Mammary epithelial cell (primary cell): ENCODE measurements at regions of chr18 and their contacts with region 1.

Region 1: GRCh38 chr18:46167971-46168370 is 63.8 kb downstream of the HAUS1 start:
- DNase-seq: no peak
- H3K4me3 ChIP-seq: no peak overlapping the region
- H3K27ac ChIP-seq: no peak overlapping the region
- H3K4me1 ChIP-seq: peaks cover 16% of the 10 kb centered on the region
- H3K27me3 ChIP-seq: no peaks in the 10 kb centered on the region
- CTCF ChIP-seq: no peak

Region 2: DNA sequence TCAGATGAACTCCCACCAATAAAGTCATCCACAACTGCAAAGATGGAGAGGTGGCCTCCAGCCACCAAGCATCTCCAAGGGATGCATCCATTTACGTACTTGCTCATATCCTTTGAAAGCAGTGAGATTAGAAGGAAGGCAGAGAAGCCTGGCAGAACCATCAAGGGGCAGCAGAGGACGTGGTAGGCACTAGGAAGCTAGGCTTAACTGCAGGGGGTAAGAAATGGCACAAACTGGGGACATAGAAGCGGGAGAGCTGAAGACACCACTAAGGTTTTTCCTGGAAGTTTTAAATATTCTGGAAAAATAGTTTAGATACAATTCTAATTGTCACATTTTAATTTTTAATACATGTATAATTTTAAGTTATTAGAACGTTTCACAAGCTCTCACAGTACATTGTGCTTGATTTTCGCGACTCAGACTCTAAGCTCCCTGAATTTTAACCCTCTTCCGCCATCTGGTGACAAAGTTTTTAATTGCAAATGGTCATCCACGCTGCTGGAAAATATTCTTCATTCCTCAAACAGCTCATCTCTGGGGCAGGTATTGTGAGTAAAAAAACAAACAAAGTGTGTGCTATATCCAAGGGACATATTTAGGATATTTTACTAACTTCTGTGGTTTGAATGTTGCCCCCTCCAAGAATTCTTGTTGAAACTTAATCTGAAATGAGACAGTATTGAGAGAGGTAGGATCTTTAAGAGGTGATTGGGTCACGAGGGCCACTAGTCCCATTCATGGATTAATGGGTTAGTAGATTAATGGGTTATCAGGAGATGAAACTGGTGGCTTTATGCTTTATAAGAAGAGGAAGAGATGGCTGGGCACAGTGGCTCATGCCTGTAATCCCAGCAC is 94.3 kb before region 1 on chr18:
- CTCF ChIA-PET with region 1: no interaction called
- dilution Hi-C with region 1: no loop called
- in situ Hi-C with region 1: no loop called
- intact Hi-C with region 1: no loop called
- DNase-seq: peak; percentile 63
- H3K4me3 ChIP-seq: no peak overlapping the region
- H3K27ac ChIP-seq: no peak overlapping the region
- H3K4me1 ChIP-seq: peaks cover 17% of the 10 kb centered on the region
- H3K27me3 ChIP-seq: no peaks in the 10 kb centered on the region
- CTCF ChIP-seq: peak; percentile 54 to 66

Region 3: GRCh38 chr18:46104128-46104911 is 63.7 kb before region 1 on chr18 and contains the start of gene HAUS1:
- CTCF ChIA-PET with region 1: no interaction called
- dilution Hi-C with region 1: loop called (anchors 10 kb)
- in situ Hi-C with region 1: no loop called
- intact Hi-C with region 1: loop called (anchors 5 kb)
- DNase-seq: peak; percentile 86
- H3K4me3 ChIP-seq: peak within 1 kb of the TSS; percentile 81 to 93 (median 93)
- H3K27ac ChIP-seq: peak within 1 kb of the TSS; percentile 60
- H3K4me1 ChIP-seq: no peaks in the 10 kb centered on the region
- H3K27me3 ChIP-seq: no peaks in the 10 kb centered on the region
- CTCF ChIP-seq: no peak
- total RNA-seq, gene HAUS1: 12.3 to 26.3 TPM